ENCODE measurements at regions of chr12 and their contacts with region 1.

Region 1: DNA sequence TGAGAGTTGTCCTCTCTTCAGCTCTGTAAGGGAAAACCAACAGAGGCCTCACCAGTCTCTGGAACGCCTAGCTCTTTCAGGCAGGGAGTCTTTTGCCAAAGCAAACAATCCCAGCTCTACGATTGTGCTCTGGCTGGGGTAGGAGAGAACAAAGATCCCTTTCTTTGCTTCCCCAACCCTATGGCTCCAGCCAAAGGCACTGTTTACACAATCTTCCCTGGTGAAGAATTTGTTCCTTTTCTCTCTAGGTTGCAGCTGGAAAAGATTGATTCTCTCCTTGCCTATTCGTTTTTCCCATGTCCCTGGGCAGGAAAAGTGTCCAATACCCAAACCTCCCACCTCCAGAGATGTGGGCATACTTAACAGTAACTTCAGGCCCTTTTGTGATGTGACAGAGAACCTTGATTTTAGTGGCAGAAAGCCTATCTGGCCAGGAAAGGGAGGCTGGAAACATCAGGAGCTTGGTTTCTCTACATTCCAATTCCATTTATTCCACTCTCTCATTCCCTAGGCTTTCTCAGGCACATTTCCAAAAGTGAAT is 16.8 kb downstream of the ATP5MC2 start:
- DNase-seq: peak; percentile 96
- ATAC-seq: peak; percentile 99
- H3K4me3 ChIP-seq: peak overlapping the region; percentile 48 to 62 (median 58); a peak in 5 of 6 replicates
- H3K27ac ChIP-seq: peak overlapping the region; percentile 96
- H3K4me1 ChIP-seq: peaks cover 45% of the 10 kb centered on the region
- H3K27me3 ChIP-seq: no peaks in the 10 kb centered on the region
- CTCF ChIP-seq: peak; percentile 18; the same call in 1 of the 2 replicates
- EP300 ChIP-seq: peak in 1 of 2 experiments; percentile 67; a peak in 1 of 4 replicates
- POLR2A ChIP-seq: peak in 1 of 2 experiments; percentile 44; a peak in 1 of 4 replicates
- RAD21 ChIP-seq: no peak

Region 2: DNA sequence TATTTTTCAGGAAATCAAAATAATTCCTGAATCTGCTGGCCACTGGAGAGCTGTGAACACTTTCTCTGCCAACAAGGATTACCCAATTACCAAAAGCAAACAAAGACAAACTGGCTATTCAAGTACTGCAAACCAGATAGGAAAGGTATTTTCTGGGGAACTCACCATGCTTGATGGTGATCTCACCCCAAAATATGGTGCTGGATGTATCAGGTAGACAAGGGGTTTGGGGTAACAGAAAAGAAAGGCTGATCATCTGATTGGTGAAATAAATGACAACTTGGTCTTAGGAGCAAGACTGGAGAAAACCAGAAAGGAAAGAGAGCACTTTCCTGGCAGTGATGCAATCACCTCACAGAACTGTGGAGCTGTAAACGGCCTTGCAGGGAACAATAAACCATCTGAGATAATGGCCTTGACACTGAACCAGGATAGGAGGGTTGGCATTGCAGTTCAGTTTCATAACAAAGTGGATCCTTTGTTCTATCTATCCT is 120.8 kb before region 1 on chr12:
- CTCF ChIA-PET with region 1: no interaction called
- POLR2A ChIA-PET with region 1: interaction called, 22 read pairs
- in situ Hi-C with region 1: no loop called
- intact Hi-C with region 1: loop called (anchors 5 kb)
- DNase-seq: peak; percentile 94
- ATAC-seq: peak; percentile 96
- H3K4me3 ChIP-seq: no peak overlapping the region; a peak in 1 of 6 replicates
- H3K27ac ChIP-seq: peak overlapping the region; percentile 76
- H3K4me1 ChIP-seq: peaks cover 31% of the 10 kb centered on the region
- H3K27me3 ChIP-seq: no peaks in the 10 kb centered on the region
- CTCF ChIP-seq: no peak
- EP300 ChIP-seq: peak; percentile 50 to 83; a peak in 3 of 4 replicates
- POLR2A ChIP-seq: no peak
- RAD21 ChIP-seq: no peak

Region 3: GRCh38 chr12:53543539-53543938 is 115.5 kb before region 1 on chr12:
- CTCF ChIA-PET with region 1: no interaction called
- POLR2A ChIA-PET with region 1: interaction called, 22 read pairs
- in situ Hi-C with region 1: no loop called
- intact Hi-C with region 1: loop called (anchors 5 kb)
- DNase-seq: peak; percentile 68
- ATAC-seq: peak; percentile 90
- H3K4me3 ChIP-seq: no peak overlapping the region
- H3K27ac ChIP-seq: no peak overlapping the region
- H3K4me1 ChIP-seq: peaks cover 35% of the 10 kb centered on the region
- H3K27me3 ChIP-seq: no peaks in the 10 kb centered on the region
- CTCF ChIP-seq: peak; percentile 69
- EP300 ChIP-seq: no peak
- POLR2A ChIP-seq: no peak
- RAD21 ChIP-seq: peak; percentile 75

Region 4: GRCh38 chr12:53625946-53626701 is 33.0 kb before region 1 on chr12 and contains the start of gene ATF7:
- CTCF ChIA-PET with region 1: no interaction called
- POLR2A ChIA-PET with region 1: interaction called, 31 read pairs
- in situ Hi-C with region 1: no loop called
- intact Hi-C with region 1: loop called (anchors 5 kb)
- DNase-seq: peak; percentile 92
- ATAC-seq: peak; percentile 97
- H3K4me3 ChIP-seq: peak within 1 kb of the TSS; percentile 85 to 95 (median 92)
- H3K27ac ChIP-seq: peak within 1 kb of the TSS; percentile 88
- H3K4me1 ChIP-seq: peaks cover 28% of the 10 kb centered on the region
- H3K27me3 ChIP-seq: no peaks in the 10 kb centered on the region; a peak in 1 of 5 replicates
- CTCF ChIP-seq: peak; percentile 22; the same call in 1 of the 2 replicates
- EP300 ChIP-seq: peak in 1 of 2 experiments; percentile 42; a peak in 2 of 4 replicates
- POLR2A ChIP-seq: peak; percentile 75 to 81
- RAD21 ChIP-seq: no peak; the same call in 1 of the 2 replicates
- total RNA-seq, gene ATF7: 9.6 and 11.3 TPM in 2 replicates

Region 5: GRCh38 chr12:53670299-53670698 is 11.2 kb after region 1 on chr12:
- CTCF ChIA-PET with region 1: no interaction called
- POLR2A ChIA-PET with region 1: interaction called, 61 read pairs
- in situ Hi-C with region 1: no loop called
- intact Hi-C with region 1: no loop called
- DNase-seq: no peak
- ATAC-seq: no peak
- H3K4me3 ChIP-seq: no peak overlapping the region
- H3K27ac ChIP-seq: no peak overlapping the region
- H3K4me1 ChIP-seq: peaks cover 16% of the 10 kb centered on the region
- H3K27me3 ChIP-seq: no peaks in the 10 kb centered on the region; a peak in 1 of 5 replicates
- CTCF ChIP-seq: no peak
- EP300 ChIP-seq: no peak
- POLR2A ChIP-seq: no peak
- RAD21 ChIP-seq: no peak

Region 6: DNA sequence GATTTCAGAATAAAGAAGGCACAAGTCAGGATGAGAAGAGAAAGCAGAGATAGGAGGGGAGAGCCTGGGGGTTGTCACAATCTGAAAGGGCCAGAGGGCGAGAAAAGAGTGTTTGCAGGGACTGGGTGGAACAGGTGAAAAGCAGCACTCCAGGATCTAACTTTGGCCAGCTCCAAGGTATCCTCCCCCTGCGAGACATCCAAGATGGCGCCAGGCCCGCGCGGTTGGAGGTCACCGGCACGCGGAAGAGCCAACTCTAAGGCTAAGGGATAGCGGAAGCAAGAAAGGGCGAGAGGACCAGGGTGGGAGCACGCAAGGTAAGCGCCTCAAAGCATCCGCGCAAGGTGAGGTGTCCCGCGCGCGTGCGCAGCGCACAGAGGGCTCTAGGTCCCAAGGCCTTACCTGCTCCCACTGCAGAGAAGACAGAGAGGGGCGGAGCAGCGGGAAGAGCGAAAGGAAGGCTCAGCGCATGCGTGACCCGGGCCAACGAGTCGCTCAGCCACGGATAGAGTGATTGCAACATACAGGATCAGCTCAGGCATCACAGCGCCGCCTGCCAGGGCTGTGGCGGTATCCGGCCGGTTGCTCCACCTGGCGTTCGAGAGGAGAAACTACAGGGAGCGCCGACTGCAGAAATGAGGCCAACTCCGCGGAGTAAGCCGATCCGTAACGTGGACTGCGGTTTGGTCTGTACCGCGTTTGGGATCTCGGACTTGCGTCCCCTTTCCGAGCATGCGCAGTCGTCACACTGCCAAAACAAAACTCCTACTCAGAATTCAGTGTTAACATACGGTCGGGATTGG is 16.8 kb after region 1 on chr12 and contains the start of gene ATP5MC2:
- CTCF ChIA-PET with region 1: interaction called, 5 read pairs
- POLR2A ChIA-PET with region 1: interaction called, 61 read pairs
- in situ Hi-C with region 1: no loop called
- intact Hi-C with region 1: no loop called
- DNase-seq: peak; percentile 96
- ATAC-seq: peak; percentile 96
- H3K4me3 ChIP-seq: peak within 1 kb of the TSS; percentile 60 to 79 (median 64)
- H3K27ac ChIP-seq: peak within 1 kb of the TSS; percentile 88
- H3K4me1 ChIP-seq: peaks cover 25% of the 10 kb centered on the region
- H3K27me3 ChIP-seq: peaks cover 0 to 12% of the 10 kb centered on the region in 2 experiments; a peak in 1 of 5 replicates
- CTCF ChIP-seq: peak; percentile 100
- EP300 ChIP-seq: 0 out of 4 replicates have a peak, but pooled peaks of 1 of the 2 experiments have one; percentile 74
- POLR2A ChIP-seq: peak; percentile 90 to 91
- RAD21 ChIP-seq: peak; percentile 100
- total RNA-seq, gene ATP5MC2: 230 and 280 TPM in 2 replicates